ENCODE measurements at regions of chr17 and their contacts with region 1.

Region 1: GRCh38 chr17:59440784-59441441 is 109.5 kb downstream of the YPEL2 start:
- DNase-seq: peak; percentile 54 to 87 (median 80)
- ATAC-seq: peak; percentile 97
- H3K4me3 ChIP-seq: no peak overlapping the region
- H3K4me3 Mint-ChIP-seq: peak overlapping the region in 8 of 10 donors; percentile 9 to 72 (median 46)
- H3K27ac ChIP-seq: no peak overlapping the region
- H3K27ac Mint-ChIP-seq: peak overlapping the region in 7 of 9 donors; percentile 13 to 89 (median 55)
- H3K4me1 ChIP-seq: peaks cover 4 to 20% of the 10 kb centered on the region in 2 donors
- H3K4me1 Mint-ChIP-seq: peaks cover 0 to 50% (median 27%) of the 10 kb centered on the region in 7 donors
- H3K27me3 ChIP-seq: no peaks in the 10 kb centered on the region
- H3K27me3 Mint-ChIP-seq: peaks cover 0 to 7% (median 0%) of the 10 kb centered on the region in 5 donors

Region 2: DNA sequence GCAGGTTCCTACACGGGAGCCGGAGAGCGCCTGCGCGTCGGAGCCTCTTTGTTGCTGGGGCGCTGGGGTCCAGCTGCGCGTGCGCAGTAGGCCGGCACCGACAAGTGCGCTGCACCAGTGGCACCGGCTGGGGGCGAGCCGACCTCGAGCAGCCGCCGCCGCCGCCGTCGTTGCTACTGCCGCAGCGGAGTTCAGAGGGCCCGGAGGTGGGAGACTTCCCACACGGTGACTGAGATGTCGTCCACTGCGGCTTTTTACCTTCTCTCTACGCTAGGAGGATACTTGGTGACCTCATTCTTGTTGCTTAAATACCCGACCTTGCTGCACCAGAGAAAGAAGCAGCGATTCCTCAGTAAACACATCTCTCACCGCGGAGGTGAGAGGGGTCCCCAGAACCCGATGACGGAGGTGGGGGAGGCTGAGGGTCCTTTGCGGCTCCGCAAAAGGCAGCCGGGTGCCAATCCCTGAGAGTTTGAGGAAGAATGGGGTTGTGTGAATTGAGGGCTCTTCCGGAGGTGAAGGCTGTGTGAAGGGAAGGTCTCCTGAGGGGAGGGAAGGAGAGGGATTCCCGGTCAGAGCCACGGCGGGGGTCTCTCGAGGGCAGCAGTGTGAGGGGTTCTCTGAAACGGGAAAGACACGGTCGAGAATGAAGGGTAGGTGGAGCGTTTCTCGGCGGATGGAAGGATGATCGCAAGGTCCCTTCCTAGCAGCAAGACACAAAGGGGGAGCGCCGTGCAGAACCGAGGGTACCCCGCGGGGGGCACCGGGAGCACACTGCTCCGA is 220.3 kb before region 1 on chr17 and contains the start of gene GDPD1:
- CTCF ChIA-PET with region 1: no interaction called
- POLR2A ChIA-PET with region 1: no interaction called
- intact Hi-C with region 1: loop called (anchors 1 to 2 kb)
- DNase-seq: peak; percentile 95 to 98 (median 97)
- ATAC-seq: peak; percentile 100
- H3K4me3 ChIP-seq: peak within 1 kb of the TSS; percentile 99
- H3K4me3 Mint-ChIP-seq: peak within 1 kb of the TSS; percentile 94 to 100 (median 98)
- H3K27ac ChIP-seq: peak within 1 kb of the TSS; percentile 92
- H3K27ac Mint-ChIP-seq: peak within 1 kb of the TSS; percentile 94 to 100 (median 98)
- H3K4me1 ChIP-seq: peaks cover 5 to 9% of the 10 kb centered on the region in 2 donors
- H3K4me1 Mint-ChIP-seq: peaks cover 5 to 16% (median 14%) of the 10 kb centered on the region in 7 donors
- H3K27me3 ChIP-seq: no peaks in the 10 kb centered on the region
- H3K27me3 Mint-ChIP-seq: peaks cover 0 to 5% (median 0%) of the 10 kb centered on the region in 5 donors
- total RNA-seq, gene GDPD1: 2.4 to 6.0 (median 3.8) TPM

Region 3: GRCh38 chr17:59331129-59331928 is 109.6 kb before region 1 on chr17 and contains the start of gene YPEL2:
- CTCF ChIA-PET with region 1: interaction called, 80 read pairs
- POLR2A ChIA-PET with region 1: interaction called, 7 read pairs
- intact Hi-C with region 1: loop called (anchors 1 kb)
- DNase-seq: peak; percentile 77 to 92 (median 89)
- ATAC-seq: peak; percentile 96
- H3K4me3 ChIP-seq: peak within 1 kb of the TSS; percentile 67
- H3K4me3 Mint-ChIP-seq: peak within 1 kb of the TSS; percentile 89 to 96 (median 94)
- H3K27ac ChIP-seq: peak within 1 kb of the TSS; percentile 77
- H3K27ac Mint-ChIP-seq: peak within 1 kb of the TSS; percentile 77 to 98 (median 94)
- H3K4me1 ChIP-seq: peaks cover 30 to 55% of the 10 kb centered on the region in 2 donors
- H3K4me1 Mint-ChIP-seq: peaks cover 53 to 85% (median 79%) of the 10 kb centered on the region in 7 donors
- H3K27me3 ChIP-seq: no peaks in the 10 kb centered on the region
- H3K27me3 Mint-ChIP-seq: peaks cover 0 to 11% (median 0%) of the 10 kb centered on the region in 5 donors
- total RNA-seq, gene YPEL2: 10.6 to 52.0 (median 46.8) TPM

Region 4: GRCh38 chr17:59342681-59343131 is 98.2 kb before region 1 on chr17:
- CTCF ChIA-PET with region 1: no interaction called
- POLR2A ChIA-PET with region 1: no interaction called
- intact Hi-C with region 1: no loop called
- DNase-seq: peak in 1 of 9 donors; percentile 2
- ATAC-seq: no peak
- H3K4me3 ChIP-seq: no peak overlapping the region
- H3K4me3 Mint-ChIP-seq: peak overlapping the region in 8 of 10 donors; percentile 2 to 46 (median 26)
- H3K27ac ChIP-seq: no peak overlapping the region
- H3K27ac Mint-ChIP-seq: peak overlapping the region; percentile 27 to 81 (median 60)
- H3K4me1 ChIP-seq: peaks cover 0 to 21% of the 10 kb centered on the region in 2 donors
- H3K4me1 Mint-ChIP-seq: peaks cover 23 to 81% (median 73%) of the 10 kb centered on the region in 7 donors
- H3K27me3 ChIP-seq: no peaks in the 10 kb centered on the region
- H3K27me3 Mint-ChIP-seq: peaks cover 0 to 2% (median 0%) of the 10 kb centered on the region in 5 donors

Region 5: GRCh38 chr17:59427425-59427921 is 13.4 kb before region 1 on chr17:
- CTCF ChIA-PET with region 1: interaction called, 11 read pairs
- POLR2A ChIA-PET with region 1: interaction called, 4 read pairs
- intact Hi-C with region 1: no loop called
- DNase-seq: peak in 5 of 9 donors; percentile 15 to 49 (median 21)
- ATAC-seq: no peak
- H3K4me3 ChIP-seq: no peak overlapping the region
- H3K4me3 Mint-ChIP-seq: no peak overlapping the region
- H3K27ac ChIP-seq: no peak overlapping the region
- H3K27ac Mint-ChIP-seq: no peak overlapping the region
- H3K4me1 ChIP-seq: no peaks in the 10 kb centered on the region
- H3K4me1 Mint-ChIP-seq: peaks cover 0 to 21% (median 7%) of the 10 kb centered on the region in 7 donors
- H3K27me3 ChIP-seq: no peaks in the 10 kb centered on the region
- H3K27me3 Mint-ChIP-seq: peaks cover 0 to 5% (median 0%) of the 10 kb centered on the region in 5 donors

Measured in naive thymus-derived CD4-positive, alpha-beta T cell (primary cell).